Activated B cell treated with CpG ODN at 0.5 μM for 24 hours (primary cell): ENCODE measurements at regions of chr1 and their contacts with region 1.

Region 1: DNA sequence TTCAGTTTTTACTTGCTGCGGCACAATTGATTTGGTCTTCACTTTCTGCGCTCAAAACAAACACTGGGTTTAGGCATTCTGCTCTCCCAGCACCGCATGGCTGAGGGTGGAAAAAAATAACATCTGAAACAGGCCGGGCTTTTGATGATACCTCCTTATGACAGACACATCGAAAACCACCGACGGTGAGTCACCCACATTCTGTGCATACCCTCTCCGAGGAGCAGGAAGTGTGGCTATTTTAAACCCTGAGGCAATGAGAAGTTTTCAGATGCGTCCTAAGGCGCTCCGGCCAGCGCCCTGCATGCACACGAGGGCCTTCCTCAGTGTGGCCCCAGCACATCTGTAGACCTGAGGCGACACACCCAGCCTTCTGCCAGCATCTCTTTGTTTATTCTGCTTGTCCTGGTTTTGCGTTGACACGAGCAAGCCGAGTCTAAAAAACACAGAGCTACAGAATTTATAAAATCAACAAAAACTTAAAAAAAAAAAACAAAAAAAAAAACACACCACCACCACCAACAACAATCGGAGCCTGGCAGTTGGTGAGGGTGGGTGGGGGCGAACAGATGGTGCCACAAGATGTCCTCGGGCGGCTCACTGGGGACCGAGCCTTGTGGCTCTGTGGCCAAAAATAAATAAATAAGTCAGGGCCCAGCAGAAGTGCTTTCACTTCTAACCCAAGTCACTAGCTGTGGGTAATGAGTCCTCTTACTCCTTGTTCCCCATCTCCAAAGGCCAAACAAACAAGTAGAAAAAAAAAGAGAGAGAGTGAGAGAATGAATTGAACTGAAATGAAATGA is 162.6 kb upstream of the IRF2BP2 start:
- DNase-seq: peak; percentile 66
- ATAC-seq: peak; percentile 81
- H3K4me3 Mint-ChIP-seq: peak overlapping the region; percentile 77
- H3K27ac Mint-ChIP-seq: peak overlapping the region; percentile 96
- H3K4me1 Mint-ChIP-seq: peaks cover 57% of the 10 kb centered on the region
- H3K27me3 Mint-ChIP-seq: no peaks in the 10 kb centered on the region
- CTCF ChIP-seq: no peak

Region 2: DNA sequence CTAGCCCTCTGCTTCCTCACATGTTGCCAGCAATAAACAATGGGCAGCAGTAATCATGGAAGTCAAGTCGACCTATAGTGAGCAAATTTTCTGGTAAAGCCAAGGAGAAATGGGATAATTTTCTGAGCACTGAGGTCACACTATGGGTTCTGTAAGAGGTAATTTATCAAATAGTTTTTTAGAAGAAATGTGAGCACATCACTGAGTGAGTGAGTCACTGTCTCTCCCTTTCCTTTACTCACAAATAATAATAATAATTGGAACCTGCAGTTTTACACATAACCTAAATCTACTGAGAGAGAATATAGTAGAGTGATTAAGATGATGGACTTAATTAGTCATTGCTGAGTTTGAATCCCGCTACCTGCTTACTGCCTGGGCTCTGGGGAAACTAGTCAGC is 844.4 kb before region 1 on chr1:
- CTCF ChIA-PET with region 1: no interaction called
- POLR2A ChIA-PET with region 1: no interaction called
- intact Hi-C with region 1: no loop called
- DNase-seq: no peak
- ATAC-seq: no peak
- H3K4me3 Mint-ChIP-seq: no peak overlapping the region
- H3K27ac Mint-ChIP-seq: no peak overlapping the region
- H3K4me1 Mint-ChIP-seq: no peaks in the 10 kb centered on the region
- H3K27me3 Mint-ChIP-seq: peaks cover 4% of the 10 kb centered on the region
- CTCF ChIP-seq: no peak

Region 3: GRCh38 chr1:234722904-234723720 is 49.4 kb before region 1 on chr1:
- CTCF ChIA-PET with region 1: no interaction called
- POLR2A ChIA-PET with region 1: interaction called, 15 read pairs
- intact Hi-C with region 1: no loop called
- DNase-seq: no peak
- ATAC-seq: peak; percentile 41
- H3K4me3 Mint-ChIP-seq: peak overlapping the region; percentile 67
- H3K27ac Mint-ChIP-seq: peak overlapping the region; percentile 71
- H3K4me1 Mint-ChIP-seq: peaks cover 46% of the 10 kb centered on the region
- H3K27me3 Mint-ChIP-seq: no peaks in the 10 kb centered on the region
- CTCF ChIP-seq: no peak

Region 4: GRCh38 chr1:234881893-234882771 is 109.6 kb after region 1 on chr1:
- CTCF ChIA-PET with region 1: no interaction called
- POLR2A ChIA-PET with region 1: interaction called, 7 read pairs
- intact Hi-C with region 1: loop called (anchors 1 kb)
- DNase-seq: no peak
- ATAC-seq: peak; percentile 70
- H3K4me3 Mint-ChIP-seq: peak overlapping the region; percentile 75
- H3K27ac Mint-ChIP-seq: peak overlapping the region; percentile 82
- H3K4me1 Mint-ChIP-seq: peaks cover 46% of the 10 kb centered on the region
- H3K27me3 Mint-ChIP-seq: no peaks in the 10 kb centered on the region
- CTCF ChIP-seq: no peak

Region 5: GRCh38 chr1:234963180-234963903 is 190.8 kb after region 1 on chr1:
- CTCF ChIA-PET with region 1: no interaction called
- POLR2A ChIA-PET with region 1: interaction called, 10 read pairs
- intact Hi-C with region 1: loop called (anchors 1 kb)
- DNase-seq: peak; percentile 84
- ATAC-seq: peak; percentile 89
- H3K4me3 Mint-ChIP-seq: peak overlapping the region; percentile 82
- H3K27ac Mint-ChIP-seq: peak overlapping the region; percentile 98
- H3K4me1 Mint-ChIP-seq: peaks cover 66% of the 10 kb centered on the region
- H3K27me3 Mint-ChIP-seq: no peaks in the 10 kb centered on the region
- CTCF ChIP-seq: no peak

Region 6: DNA sequence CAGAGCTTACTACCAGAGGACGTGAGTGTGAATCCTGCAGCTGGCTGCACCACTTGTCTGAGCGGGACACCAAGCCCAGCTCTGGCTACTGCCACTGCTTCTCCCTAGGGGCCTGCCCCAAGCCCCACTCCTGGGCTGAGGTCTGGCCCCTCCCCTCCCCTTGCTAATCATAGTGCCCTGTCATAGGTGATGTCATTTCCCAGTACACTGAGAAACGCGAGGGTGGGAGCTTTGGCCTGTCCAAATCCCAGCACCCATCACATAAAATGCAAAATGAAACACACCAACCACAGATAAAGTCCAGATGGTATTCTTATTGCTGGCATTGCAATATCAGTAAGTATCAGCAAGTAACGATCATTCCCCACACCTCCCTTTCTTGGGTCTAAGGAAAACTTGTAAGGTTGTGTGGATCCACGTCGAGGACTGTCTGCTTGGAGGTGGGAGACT is 278.4 kb after region 1 on chr1:
- CTCF ChIA-PET with region 1: no interaction called
- POLR2A ChIA-PET with region 1: interaction called, 3 read pairs
- intact Hi-C with region 1: loop called (anchors 1 kb)
- DNase-seq: peak; percentile 30
- ATAC-seq: peak; percentile 51
- H3K4me3 Mint-ChIP-seq: peak overlapping the region; percentile 24
- H3K27ac Mint-ChIP-seq: peak overlapping the region; percentile 60
- H3K4me1 Mint-ChIP-seq: peaks cover 50% of the 10 kb centered on the region
- H3K27me3 Mint-ChIP-seq: no peaks in the 10 kb centered on the region
- CTCF ChIP-seq: no peak